Naive thymus-derived CD4-positive, alpha-beta T cell (primary cell): ENCODE measurements at regions of chr2 and their contacts with region 1.

Region 1: GRCh38 chr2:96856776-96857673 is 791 bp downstream of the ANKRD39 start:
- DNase-seq: peak in 5 of 9 donors; percentile 27 to 39 (median 35)
- ATAC-seq: no peak
- H3K4me3 ChIP-seq: peak overlapping the region; percentile 72
- H3K4me3 Mint-ChIP-seq: peak overlapping the region; percentile 85 to 93 (median 89)
- H3K27ac ChIP-seq: peak overlapping the region; percentile 79
- H3K27ac Mint-ChIP-seq: peak overlapping the region; percentile 38 to 92 (median 84)
- H3K4me1 ChIP-seq: peaks cover 14 to 16% of the 10 kb centered on the region in 2 donors
- H3K4me1 Mint-ChIP-seq: peaks cover 21 to 57% (median 43%) of the 10 kb centered on the region in 7 donors
- H3K27me3 ChIP-seq: no peaks in the 10 kb centered on the region
- H3K27me3 Mint-ChIP-seq: no peaks in the 10 kb centered on the region

Region 2: GRCh38 chr2:96656540-96656939 is 200.5 kb before region 1 on chr2:
- CTCF ChIA-PET with region 1: no interaction called
- POLR2A ChIA-PET with region 1: no interaction called
- intact Hi-C with region 1: no loop called
- DNase-seq: no peak
- ATAC-seq: no peak
- H3K4me3 ChIP-seq: no peak overlapping the region
- H3K4me3 Mint-ChIP-seq: no peak overlapping the region
- H3K27ac ChIP-seq: no peak overlapping the region
- H3K27ac Mint-ChIP-seq: no peak overlapping the region
- H3K4me1 ChIP-seq: no peaks in the 10 kb centered on the region
- H3K4me1 Mint-ChIP-seq: peaks cover 0 to 2% (median 0%) of the 10 kb centered on the region in 7 donors
- H3K27me3 ChIP-seq: no peaks in the 10 kb centered on the region
- H3K27me3 Mint-ChIP-seq: peaks cover 0 to 9% (median 0%) of the 10 kb centered on the region in 5 donors

Region 3: DNA sequence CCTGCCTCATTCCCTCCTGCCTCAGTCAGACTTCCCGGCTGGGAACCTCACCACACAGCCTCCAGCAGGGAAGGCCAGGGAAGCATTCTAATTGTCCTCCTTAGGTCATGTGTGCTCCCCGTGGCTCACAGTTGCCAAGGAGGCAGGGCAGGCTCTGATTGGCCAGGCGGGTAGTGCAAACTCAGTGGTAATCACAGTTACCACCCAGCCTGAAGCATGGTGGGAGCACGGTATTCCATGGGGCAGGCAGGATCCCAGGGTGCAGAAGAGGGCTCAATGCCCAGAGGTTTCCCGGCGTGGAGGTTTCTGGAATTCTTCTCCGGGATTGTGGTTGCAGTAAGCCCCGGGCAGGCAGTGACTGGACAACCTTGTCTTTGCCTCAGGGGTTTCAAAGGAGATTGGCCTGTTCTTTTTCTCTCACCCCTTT is 187.3 kb before region 1 on chr2:
- CTCF ChIA-PET with region 1: no interaction called
- POLR2A ChIA-PET with region 1: no interaction called
- intact Hi-C with region 1: no loop called
- DNase-seq: no peak
- ATAC-seq: no peak
- H3K4me3 ChIP-seq: no peak overlapping the region
- H3K4me3 Mint-ChIP-seq: no peak overlapping the region
- H3K27ac ChIP-seq: no peak overlapping the region
- H3K27ac Mint-ChIP-seq: no peak overlapping the region
- H3K4me1 ChIP-seq: no peaks in the 10 kb centered on the region
- H3K4me1 Mint-ChIP-seq: peaks cover 0 to 2% (median 0%) of the 10 kb centered on the region in 7 donors
- H3K27me3 ChIP-seq: no peaks in the 10 kb centered on the region
- H3K27me3 Mint-ChIP-seq: peaks cover 0 to 12% (median 0%) of the 10 kb centered on the region in 5 donors

Region 4: GRCh38 chr2:96739633-96740428 is 117.2 kb before region 1 on chr2 and contains the start of gene LMAN2L:
- CTCF ChIA-PET with region 1: interaction called, 3 read pairs
- POLR2A ChIA-PET with region 1: interaction called, 8 read pairs
- intact Hi-C with region 1: loop called in 1 of 2 experiments (anchors 1 kb)
- DNase-seq: peak; percentile 78 to 99 (median 94)
- ATAC-seq: peak; percentile 100
- H3K4me3 ChIP-seq: peak within 1 kb of the TSS; percentile 70
- H3K4me3 Mint-ChIP-seq: peak within 1 kb of the TSS; percentile 92 to 100 (median 97)
- H3K27ac ChIP-seq: peak within 1 kb of the TSS; percentile 75
- H3K27ac Mint-ChIP-seq: peak within 1 kb of the TSS; percentile 83 to 96 (median 90)
- H3K4me1 ChIP-seq: peaks cover 6% of the 10 kb centered on the region in 2 donors
- H3K4me1 Mint-ChIP-seq: peaks cover 20 to 48% (median 37%) of the 10 kb centered on the region in 7 donors
- H3K27me3 ChIP-seq: no peaks in the 10 kb centered on the region
- H3K27me3 Mint-ChIP-seq: no peaks in the 10 kb centered on the region
- total RNA-seq, gene LMAN2L: 5.0 to 10.9 (median 9.2) TPM

Region 5: DNA sequence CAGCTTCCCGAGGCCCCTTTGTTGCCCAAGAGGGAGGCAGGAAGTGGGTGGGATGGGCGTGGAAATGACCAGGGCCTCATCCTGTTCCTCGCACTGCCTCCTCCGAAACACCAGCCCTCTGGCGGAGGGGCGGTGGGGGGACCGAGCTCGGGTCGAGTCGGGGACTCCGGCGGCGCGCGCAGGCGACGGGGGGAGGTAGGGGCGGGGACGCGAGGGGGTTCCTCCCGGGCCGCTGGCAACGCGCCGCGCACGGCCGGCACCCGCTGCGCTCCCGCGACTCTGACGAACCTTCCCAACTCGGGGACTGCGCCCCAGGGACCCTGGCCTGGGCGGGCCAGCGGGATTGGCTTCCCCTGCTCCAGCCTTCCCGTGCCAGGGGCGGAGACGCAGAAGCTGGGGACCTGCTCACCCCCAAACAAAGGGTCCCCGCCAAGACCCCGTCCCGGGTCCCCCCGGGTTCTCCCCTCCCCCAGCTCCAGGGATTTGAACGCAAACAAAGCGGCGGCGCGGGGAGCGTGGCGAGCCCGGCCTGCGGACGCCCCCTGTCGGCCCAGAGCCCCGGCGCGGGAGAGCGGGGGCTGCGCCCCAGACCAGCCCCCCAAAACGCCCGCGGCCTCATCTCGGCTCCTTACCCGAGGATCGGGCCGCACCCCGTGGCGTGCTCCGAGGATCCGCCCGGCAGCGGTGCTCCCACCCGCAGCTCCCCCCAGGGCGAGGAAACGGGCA is 11.7 kb after region 1 on chr2:
- CTCF ChIA-PET with region 1: interaction called, 16 read pairs
- POLR2A ChIA-PET with region 1: interaction called, 69 read pairs
- intact Hi-C with region 1: loop called (anchors 1 kb)
- DNase-seq: peak in 8 of 9 donors; percentile 37 to 71 (median 56)
- ATAC-seq: peak; percentile 37
- H3K4me3 ChIP-seq: peak overlapping the region; percentile 81
- H3K4me3 Mint-ChIP-seq: peak overlapping the region; percentile 81 to 95 (median 88)
- H3K27ac ChIP-seq: peak overlapping the region; percentile 84
- H3K27ac Mint-ChIP-seq: peak overlapping the region in 8 of 9 donors; percentile 75 to 92 (median 85)
- H3K4me1 ChIP-seq: peaks cover 24 to 32% of the 10 kb centered on the region in 2 donors
- H3K4me1 Mint-ChIP-seq: peaks cover 23 to 52% (median 42%) of the 10 kb centered on the region in 7 donors
- H3K27me3 ChIP-seq: no peaks in the 10 kb centered on the region
- H3K27me3 Mint-ChIP-seq: peaks cover 0 to 12% (median 0%) of the 10 kb centered on the region in 5 donors

Region 6: DNA sequence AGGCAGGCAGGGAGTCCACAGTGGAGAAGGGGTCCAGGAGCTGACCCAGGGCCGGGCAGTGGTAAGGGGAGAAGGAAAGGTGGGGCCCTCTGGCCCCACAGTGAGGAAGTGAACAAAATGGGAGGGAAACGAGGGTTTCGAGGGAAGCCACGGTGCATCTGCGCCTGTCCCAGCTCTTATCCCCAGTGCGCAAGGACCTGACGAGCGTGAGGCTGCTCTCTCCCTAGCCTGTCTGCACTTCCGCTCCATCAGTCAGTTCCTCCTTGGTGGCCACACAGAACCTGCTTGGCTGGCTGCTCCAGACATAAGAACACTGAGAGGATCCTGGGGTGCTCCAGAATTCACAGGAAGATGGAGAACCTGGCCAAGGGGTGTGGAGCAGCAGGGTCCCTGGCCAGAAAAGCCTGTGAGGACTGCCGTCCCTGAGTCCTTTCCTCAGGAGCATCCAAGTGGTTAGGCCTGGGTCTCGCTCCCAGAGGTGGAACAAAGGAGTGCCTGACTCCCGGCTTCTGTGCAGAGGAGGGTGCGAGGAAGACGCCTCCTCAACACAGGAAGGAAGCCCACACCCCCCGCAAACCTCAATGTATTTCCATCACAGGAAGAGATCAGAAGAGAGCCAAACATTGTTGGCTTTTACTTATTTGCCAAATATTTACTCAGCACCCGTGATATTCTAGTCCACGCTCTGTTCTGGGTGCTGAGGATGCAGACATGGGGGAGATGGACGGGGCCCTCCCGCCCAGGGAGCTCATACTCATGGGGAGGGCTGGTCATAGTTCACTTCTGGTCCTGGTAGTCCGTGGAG is 56.6 kb after region 1 on chr2:
- CTCF ChIA-PET with region 1: interaction called, 5 read pairs
- POLR2A ChIA-PET with region 1: interaction called, 13 read pairs
- intact Hi-C with region 1: loop called in 1 of 2 experiments (anchors 1 kb)
- DNase-seq: peak in 8 of 9 donors; percentile 55 to 78 (median 72)
- ATAC-seq: peak; percentile 85
- H3K4me3 ChIP-seq: peak overlapping the region; percentile 68
- H3K4me3 Mint-ChIP-seq: peak overlapping the region; percentile 79 to 94 (median 88)
- H3K27ac ChIP-seq: peak overlapping the region; percentile 61
- H3K27ac Mint-ChIP-seq: peak overlapping the region; percentile 90 to 100 (median 97)
- H3K4me1 ChIP-seq: peaks cover 33 to 38% of the 10 kb centered on the region in 2 donors
- H3K4me1 Mint-ChIP-seq: peaks cover 45 to 96% (median 89%) of the 10 kb centered on the region in 7 donors
- H3K27me3 ChIP-seq: no peaks in the 10 kb centered on the region
- H3K27me3 Mint-ChIP-seq: peaks cover 0 to 7% (median 0%) of the 10 kb centered on the region in 5 donors

Region 7: DNA sequence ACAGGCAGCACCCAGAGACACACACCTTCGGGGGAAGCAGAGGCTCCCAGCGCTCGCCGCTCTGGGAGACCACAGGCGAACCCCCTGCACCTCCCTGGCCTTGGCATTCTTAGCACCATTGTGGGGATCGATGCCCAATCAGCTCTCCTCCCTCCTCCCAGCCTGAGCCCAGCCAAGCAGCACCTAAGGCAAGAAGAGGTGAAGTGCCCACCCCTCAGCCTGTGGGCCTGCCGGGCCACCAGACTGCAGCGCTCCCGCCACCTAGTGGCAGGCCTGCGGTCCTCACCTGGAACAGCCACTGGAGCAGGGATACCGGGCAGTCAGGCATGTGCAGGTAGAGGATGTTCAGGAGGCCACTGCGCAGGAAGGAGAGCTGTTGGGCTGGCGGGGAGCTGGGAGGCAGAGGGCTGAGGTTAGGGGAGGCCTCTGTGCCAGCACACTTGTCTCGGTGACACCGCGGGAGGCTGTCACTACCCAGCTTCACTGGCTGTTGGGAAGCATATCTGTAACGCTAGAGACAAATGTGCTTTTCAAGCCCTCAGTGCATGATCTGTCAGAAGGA is 94.1 kb after region 1 on chr2:
- CTCF ChIA-PET with region 1: interaction called, 144 read pairs
- POLR2A ChIA-PET with region 1: interaction called, 288 read pairs
- intact Hi-C with region 1: loop called (anchors 1 kb)
- DNase-seq: peak; percentile 68 to 85 (median 80)
- ATAC-seq: peak; percentile 93
- H3K4me3 ChIP-seq: no peak overlapping the region
- H3K4me3 Mint-ChIP-seq: peak overlapping the region in 1 of 10 donors; percentile 61
- H3K27ac ChIP-seq: no peak overlapping the region
- H3K27ac Mint-ChIP-seq: peak overlapping the region in 6 of 9 donors; percentile 26 to 80 (median 61)
- H3K4me1 ChIP-seq: peaks cover 13 to 14% of the 10 kb centered on the region in 2 donors
- H3K4me1 Mint-ChIP-seq: peaks cover 14 to 40% (median 20%) of the 10 kb centered on the region in 7 donors
- H3K27me3 ChIP-seq: no peaks in the 10 kb centered on the region
- H3K27me3 Mint-ChIP-seq: peaks cover 0 to 2% (median 0%) of the 10 kb centered on the region in 5 donors